ENCODE measurements at regions of chr14 and their contacts with region 1.

Region 1: DNA sequence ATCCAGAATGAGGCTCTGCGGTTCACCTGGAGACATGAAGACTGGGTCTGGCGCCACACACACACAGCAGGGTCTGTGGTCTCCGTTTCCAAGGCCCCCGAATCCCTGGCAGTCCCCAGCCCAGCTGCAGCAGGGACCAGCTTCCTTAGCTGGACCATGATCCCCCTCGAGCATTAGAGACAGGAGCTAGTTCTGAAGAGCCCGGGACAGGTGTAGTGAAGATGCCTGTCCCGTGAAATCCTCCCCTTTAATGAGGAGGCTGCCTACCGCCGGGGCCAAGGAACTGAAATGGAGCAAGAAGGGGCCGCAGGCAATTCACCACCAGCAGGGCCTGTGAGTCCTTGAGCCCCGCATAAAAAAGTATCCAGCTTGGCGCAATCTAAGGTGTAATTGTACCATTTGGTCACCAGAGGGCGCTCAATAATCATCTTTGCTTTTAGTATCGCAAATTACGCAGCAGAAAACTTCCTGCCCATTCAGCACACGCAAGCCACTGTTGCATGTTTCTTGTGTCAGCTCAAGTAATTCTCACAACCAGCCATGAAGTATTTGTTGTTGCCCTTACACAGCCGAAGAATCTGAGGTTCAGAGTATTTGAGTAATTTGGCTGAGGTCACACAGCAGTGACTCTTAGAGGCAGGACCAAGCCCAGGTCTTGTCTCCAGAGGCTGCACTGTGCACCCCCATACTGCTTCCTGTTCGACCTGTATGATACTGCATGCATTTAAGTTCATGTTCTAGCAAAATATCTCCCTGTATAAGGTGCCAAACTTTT is 54.3 kb upstream of the PPP2R5C start:
- DNase-seq: no peak
- ATAC-seq: peak; percentile 70 to 88 (median 81)
- H3K4me3 ChIP-seq: peak overlapping the region; percentile 19
- H3K27ac ChIP-seq: no peak overlapping the region
- H3K4me1 ChIP-seq: peaks cover 7% of the 10 kb centered on the region
- H3K27me3 ChIP-seq: peaks cover 0 to 8% (median 5%) of the 10 kb centered on the region in 3 donors
- CTCF ChIP-seq: peak; percentile 89

Region 2: GRCh38 chr14:101761032-101761880 is 54.0 kb after region 1 on chr14 and contains the start of gene PPP2R5C:
- intact Hi-C with region 1: loop called in 1 of 2 experiments (anchors 5 kb)
- DNase-seq: peak; percentile 95 to 96
- ATAC-seq: peak; percentile 85 to 88 (median 86)
- H3K4me3 ChIP-seq: peak within 1 kb of the TSS; percentile 99
- H3K27ac ChIP-seq: peak within 1 kb of the TSS; percentile 95
- H3K4me1 ChIP-seq: no peaks in the 10 kb centered on the region
- H3K27me3 ChIP-seq: no peaks in the 10 kb centered on the region
- CTCF ChIP-seq: no peak
- total RNA-seq, gene PPP2R5C: 53.1 to 76.6 (median 63.0) TPM

Region 3: GRCh38 chr14:101843665-101844064 is 136.4 kb after region 1 on chr14:
- intact Hi-C with region 1: loop called in 1 of 2 experiments (anchors 5 kb)
- DNase-seq: no peak
- ATAC-seq: peak in 2 of 4 donors; percentile 32 to 54
- H3K4me3 ChIP-seq: no peak overlapping the region
- H3K27ac ChIP-seq: no peak overlapping the region
- H3K4me1 ChIP-seq: peaks cover 26% of the 10 kb centered on the region
- H3K27me3 ChIP-seq: no peaks in the 10 kb centered on the region
- CTCF ChIP-seq: peak; percentile 43

Region 4: GRCh38 chr14:101964297-101965144 is 257.3 kb after region 1 on chr14 and contains the start of gene DYNC1H1:
- intact Hi-C with region 1: loop called (anchors 5 to 10 kb)
- DNase-seq: peak; percentile 97
- ATAC-seq: peak; percentile 87 to 92 (median 90)
- H3K4me3 ChIP-seq: peak within 1 kb of the TSS; percentile 98
- H3K27ac ChIP-seq: peak within 1 kb of the TSS; percentile 96
- H3K4me1 ChIP-seq: peaks cover 32% of the 10 kb centered on the region
- H3K27me3 ChIP-seq: no peaks in the 10 kb centered on the region
- CTCF ChIP-seq: no peak
- total RNA-seq, gene DYNC1H1: 332 to 634 (median 549) TPM

Region 5: DNA sequence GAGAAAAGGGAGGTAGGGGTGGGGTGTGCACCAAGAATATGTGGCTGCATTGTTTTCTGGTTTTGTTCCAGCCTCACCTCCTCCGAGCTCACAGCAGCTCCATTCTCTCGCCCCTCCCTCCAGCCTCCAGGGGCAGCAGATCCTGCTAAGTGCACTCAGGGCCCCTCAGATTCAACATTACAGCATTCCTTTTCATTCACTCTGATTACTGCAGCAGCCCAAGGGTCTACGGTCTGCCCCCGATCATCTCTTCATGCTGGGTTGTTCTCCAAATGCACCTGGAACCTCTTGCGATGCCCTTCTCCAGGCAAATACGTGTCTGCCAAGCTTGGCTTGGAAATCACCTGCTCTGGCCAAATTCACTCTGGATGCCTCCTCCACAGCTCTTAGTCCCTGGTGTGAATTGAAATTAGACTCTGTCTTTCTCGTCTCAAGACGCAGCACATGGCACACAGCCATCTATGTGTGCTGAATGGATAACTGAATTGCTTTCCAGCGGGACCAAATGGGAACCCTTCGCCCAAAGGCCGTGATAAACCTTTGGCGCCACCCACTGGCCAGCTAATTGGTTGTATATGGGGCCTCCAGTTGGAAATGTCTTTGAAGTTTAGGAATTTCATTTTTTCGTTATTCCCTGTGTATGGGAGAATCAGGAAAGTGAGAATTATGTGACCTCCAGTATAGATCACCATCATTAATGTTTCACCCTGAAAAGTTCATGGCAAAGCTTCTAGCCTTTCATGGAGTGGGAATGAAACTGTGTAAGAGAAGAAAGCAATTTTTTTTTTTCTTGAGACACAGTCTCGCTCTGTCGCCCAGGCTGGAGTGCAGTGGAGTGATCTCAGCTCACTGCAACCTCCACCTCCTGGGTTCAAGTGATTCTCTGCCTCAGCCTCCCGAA is 389.2 kb after region 1 on chr14:
- intact Hi-C with region 1: loop called (anchors 5 kb)
- DNase-seq: peak; percentile 88 to 93
- ATAC-seq: peak; percentile 85 to 98 (median 88)
- H3K4me3 ChIP-seq: no peak overlapping the region
- H3K27ac ChIP-seq: no peak overlapping the region
- H3K4me1 ChIP-seq: peaks cover 10% of the 10 kb centered on the region
- H3K27me3 ChIP-seq: no peaks in the 10 kb centered on the region
- CTCF ChIP-seq: peak; percentile 84

Region 6: GRCh38 chr14:102209217-102209966 is 502.1 kb after region 1 on chr14:
- intact Hi-C with region 1: loop called in 1 of 2 experiments (anchors 5 kb)
- DNase-seq: peak in 1 of 2 donors; percentile 79
- ATAC-seq: peak; percentile 90 to 94 (median 92)
- H3K4me3 ChIP-seq: no peak overlapping the region
- H3K27ac ChIP-seq: peak overlapping the region; percentile 64
- H3K4me1 ChIP-seq: peaks cover 14% of the 10 kb centered on the region
- H3K27me3 ChIP-seq: no peaks in the 10 kb centered on the region
- CTCF ChIP-seq: peak; percentile 52